ENCODE measurements at regions of chr20 and their contacts with region 1.

Region 1: GRCh38 chr20:46558511-46558959 is 8.1 kb upstream of the OCSTAMP start:
- DNase-seq: peak; percentile 45
- ATAC-seq: peak; percentile 7 to 74

Region 2: GRCh38 chr20:46416421-46416820 is 142.1 kb before region 1 on chr20:
- intact Hi-C with region 1: no loop called
- DNase-seq: no peak
- ATAC-seq: no peak

Region 3: GRCh38 chr20:46681032-46681854 is 122.7 kb after region 1 on chr20:
- intact Hi-C with region 1: loop called in 1 of 2 experiments (anchors 2 kb)
- DNase-seq: peak; percentile 43
- ATAC-seq: peak in 1 of 2 donors; percentile 37

Measured in left cardiac atrium (tissue), 4 donors.